BJ (cell line): ENCODE measurements at regions of chr12 and their contacts with region 1.

Region 1: DNA sequence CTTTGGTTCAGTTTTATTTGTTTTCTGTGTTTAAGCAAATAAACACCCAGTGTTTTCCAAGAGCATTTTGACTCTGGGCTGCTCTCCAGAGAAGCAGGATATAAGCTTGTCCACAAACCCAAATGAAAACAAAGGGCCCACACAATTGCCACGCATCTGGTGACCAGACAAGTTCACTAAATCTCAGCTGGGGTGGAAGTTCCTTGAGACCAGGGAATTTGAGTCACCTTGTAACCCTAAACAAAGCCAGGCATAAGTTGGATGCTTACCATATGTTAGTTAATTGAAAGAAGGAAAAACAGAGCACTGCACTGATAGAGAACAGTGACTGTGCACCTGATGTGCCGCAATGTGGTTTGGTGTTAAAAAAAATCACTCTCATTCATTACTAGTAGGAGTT is 1.6 kb upstream of the TXNRD1 start:
- DNase-seq: peak; percentile 98
- H3K4me3 ChIP-seq: no peak overlapping the region
- H3K27me3 ChIP-seq: no peaks in the 10 kb centered on the region
- CTCF ChIP-seq: no peak

Region 2: GRCh38 chr12:104263580-104264358 is 49.8 kb after region 1 on chr12:
- CTCF ChIA-PET with region 1: no interaction called
- POLR2A ChIA-PET with region 1: interaction called, 14 read pairs
- DNase-seq: peak; percentile 82
- H3K4me3 ChIP-seq: no peak overlapping the region
- H3K27me3 ChIP-seq: no peaks in the 10 kb centered on the region
- CTCF ChIP-seq: no peak